ENCODE measurements at regions of chr15 and their contacts with region 1.

Region 1: DNA sequence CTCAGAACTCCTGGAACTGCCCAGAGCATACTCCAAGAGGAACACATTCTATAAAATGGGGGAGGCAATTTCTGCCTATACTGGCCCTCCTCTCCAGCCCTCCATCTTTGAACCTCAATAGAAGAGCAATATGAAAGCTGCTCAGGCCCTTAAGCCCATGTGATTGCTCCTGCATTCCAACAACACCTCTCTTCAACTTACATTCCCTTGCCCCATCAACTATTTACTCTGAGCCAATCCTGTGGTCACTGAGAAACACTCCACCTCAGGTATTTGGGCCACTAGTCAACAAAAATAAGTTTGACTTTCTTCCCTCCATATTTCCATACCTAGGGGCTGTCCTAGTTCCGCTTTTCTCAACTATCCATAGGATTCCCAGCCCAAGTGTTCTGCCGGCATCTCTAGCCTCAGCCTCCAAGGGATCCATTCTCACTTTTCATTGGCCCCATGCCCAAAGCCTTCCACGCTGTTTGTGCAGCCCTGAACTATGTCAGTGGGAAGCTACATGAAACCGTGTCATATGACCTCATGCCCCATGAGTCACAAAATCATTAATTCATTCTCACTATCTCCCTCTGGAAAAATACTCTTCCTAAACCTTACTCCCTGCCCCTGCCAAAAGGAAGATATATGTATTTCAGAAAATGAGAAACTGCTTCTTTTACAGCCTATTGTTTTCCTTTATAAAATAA is 61.6 kb downstream of the GJD2 start:
- DNase-seq: no peak
- ATAC-seq: no peak
- H3K4me3 ChIP-seq: no peak overlapping the region
- H3K27ac ChIP-seq: no peak overlapping the region
- H3K4me1 ChIP-seq: no peaks in the 10 kb centered on the region
- H3K27me3 ChIP-seq: no peaks in the 10 kb centered on the region
- CTCF ChIP-seq: no peak

Region 2: GRCh38 chr15:34637305-34637704 is 55.9 kb before region 1 on chr15:
- CTCF ChIA-PET with region 1: no interaction called
- POLR2A ChIA-PET with region 1: no interaction called
- in situ Hi-C with region 1: no loop called
- intact Hi-C with region 1: loop called (anchors 10 kb)
- DNase-seq: no peak
- ATAC-seq: no peak
- H3K4me3 ChIP-seq: no peak overlapping the region
- H3K27ac ChIP-seq: no peak overlapping the region
- H3K4me1 ChIP-seq: no peaks in the 10 kb centered on the region
- H3K27me3 ChIP-seq: no peaks in the 10 kb centered on the region
- CTCF ChIP-seq: no peak

Region 3: GRCh38 chr15:34682673-34683072 is 10.5 kb before region 1 on chr15:
- CTCF ChIA-PET with region 1: no interaction called
- POLR2A ChIA-PET with region 1: no interaction called
- in situ Hi-C with region 1: no loop called
- intact Hi-C with region 1: no loop called
- DNase-seq: no peak
- ATAC-seq: no peak
- H3K4me3 ChIP-seq: no peak overlapping the region
- H3K27ac ChIP-seq: no peak overlapping the region
- H3K4me1 ChIP-seq: no peaks in the 10 kb centered on the region
- H3K27me3 ChIP-seq: peaks cover under 1% of the 10 kb centered on the region; the same call in 1 of the 2 replicates
- CTCF ChIP-seq: no peak